Ascending aorta (tissue), 2 donors: ENCODE measurements at regions of chr1 and their contacts with region 1.

Region 1: DNA sequence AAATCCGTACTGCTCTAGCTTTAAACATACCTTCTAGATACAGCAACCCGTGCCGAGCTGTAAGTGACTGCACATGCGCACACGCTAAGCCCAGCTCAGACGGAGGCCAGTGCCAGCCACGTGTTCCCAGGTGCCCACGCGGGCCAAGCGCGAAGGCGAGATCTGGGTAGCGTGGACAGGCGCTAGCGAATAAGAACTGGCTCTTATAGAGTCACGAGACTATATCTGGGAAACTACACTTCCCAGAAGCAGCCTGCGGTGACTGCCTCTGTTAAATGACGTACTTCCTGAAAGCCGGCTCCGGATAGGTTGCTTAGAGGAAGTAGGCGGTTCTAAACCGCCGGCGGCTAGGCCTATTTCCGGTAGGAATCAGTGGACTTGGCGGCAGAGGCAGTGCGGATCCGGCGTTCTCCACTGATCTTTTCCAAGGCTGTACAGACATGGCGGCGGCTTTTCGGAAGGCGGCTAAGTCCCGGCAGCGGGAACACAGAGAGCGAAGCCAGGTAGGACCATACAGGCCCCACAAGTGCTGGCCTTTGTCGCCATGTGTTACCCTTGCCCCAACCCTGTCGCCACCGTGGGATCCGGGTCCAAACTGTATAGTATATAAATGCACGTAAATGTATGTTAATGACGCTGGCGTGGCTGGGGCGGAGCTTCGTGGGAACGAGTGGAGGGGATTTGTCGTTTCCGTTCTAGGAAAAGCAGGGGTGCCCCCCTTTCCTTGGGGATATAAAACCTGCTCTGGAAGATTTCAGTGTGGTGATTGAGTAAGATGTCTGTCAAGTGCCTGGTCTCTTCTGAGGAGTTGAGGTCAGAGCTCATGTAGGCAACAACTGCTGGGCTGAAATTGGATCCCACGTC is at the start of gene UTP11:
- DNase-seq: peak; percentile 90 to 97
- H3K4me3 ChIP-seq: peak within 1 kb of the TSS; percentile 75 to 79
- H3K27ac ChIP-seq: peak within 1 kb of the TSS; percentile 88 to 94
- H3K4me1 ChIP-seq: peaks cover 13 to 31% of the 10 kb centered on the region in 2 donors
- H3K27me3 ChIP-seq: no peaks in the 10 kb centered on the region
- CTCF ChIP-seq: no peak
- total RNA-seq, gene UTP11: 16.5 TPM

Region 2: GRCh38 chr1:36450270-36450918 is 1562.2 kb before region 1 on chr1 and contains the start of gene OSCP1:
- intact Hi-C with region 1: loop called (anchors 10 kb)
- DNase-seq: peak; percentile 75 to 97
- H3K4me3 ChIP-seq: peak within 1 kb of the TSS; percentile 55 to 82
- H3K27ac ChIP-seq: peak within 1 kb of the TSS; percentile 95 to 97
- H3K4me1 ChIP-seq: peaks cover 3 to 8% of the 10 kb centered on the region in 2 donors
- H3K27me3 ChIP-seq: no peaks in the 10 kb centered on the region
- CTCF ChIP-seq: no peak
- total RNA-seq, gene OSCP1: 10.6 TPM

Region 3: DNA sequence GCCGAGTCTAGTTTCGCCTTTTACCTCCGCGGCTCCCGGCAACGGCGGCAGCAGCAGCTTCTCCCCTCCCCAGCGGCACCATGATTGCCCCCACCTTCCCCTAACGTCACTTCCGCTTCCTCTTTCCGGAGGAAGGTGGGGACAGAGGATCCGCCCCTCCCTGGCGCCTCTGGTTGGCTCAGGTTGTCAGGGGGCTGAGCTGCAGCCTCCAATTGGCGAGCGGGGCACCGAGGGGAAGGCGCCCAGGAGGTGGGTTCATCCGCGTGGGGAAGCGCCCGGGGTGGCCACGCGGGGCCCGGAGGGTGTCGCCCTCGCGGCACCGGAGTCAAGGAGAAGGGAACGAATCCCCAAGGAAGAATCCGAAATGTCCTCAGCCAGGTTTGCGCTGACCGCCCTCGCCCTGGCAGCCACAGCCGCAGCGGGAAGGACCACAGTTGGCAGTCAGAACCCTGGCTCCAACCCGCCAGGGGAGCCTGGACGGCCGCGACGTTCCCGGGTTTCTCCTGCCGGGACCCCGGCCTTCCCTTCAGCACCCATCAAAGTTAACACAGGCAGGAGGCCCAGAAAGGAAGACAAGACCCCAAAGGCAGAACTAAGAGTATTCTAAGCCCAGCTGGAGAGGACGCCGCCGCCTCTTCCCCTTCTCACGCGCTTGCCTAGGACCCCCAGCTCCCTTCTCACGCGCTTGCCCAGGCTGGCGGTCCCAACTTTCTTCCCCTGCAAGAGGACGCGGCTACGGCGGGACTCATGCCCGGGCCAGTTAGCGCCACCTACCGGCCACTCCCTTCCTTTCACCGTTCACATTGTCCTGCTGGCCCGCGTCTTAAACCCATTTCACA is 152.9 kb before region 1 on chr1 and contains the start of gene MTF1:
- intact Hi-C with region 1: loop called (anchors 1 kb)
- DNase-seq: peak; percentile 92 to 98
- H3K4me3 ChIP-seq: peak within 1 kb of the TSS; percentile 68 to 80
- H3K27ac ChIP-seq: peak within 1 kb of the TSS; percentile 82 to 87
- H3K4me1 ChIP-seq: peaks cover 6 to 19% of the 10 kb centered on the region in 2 donors
- H3K27me3 ChIP-seq: no peaks in the 10 kb centered on the region
- CTCF ChIP-seq: peak; percentile 66 to 91 (median 81)
- total RNA-seq, gene MTF1: 10.6 TPM

Region 4: DNA sequence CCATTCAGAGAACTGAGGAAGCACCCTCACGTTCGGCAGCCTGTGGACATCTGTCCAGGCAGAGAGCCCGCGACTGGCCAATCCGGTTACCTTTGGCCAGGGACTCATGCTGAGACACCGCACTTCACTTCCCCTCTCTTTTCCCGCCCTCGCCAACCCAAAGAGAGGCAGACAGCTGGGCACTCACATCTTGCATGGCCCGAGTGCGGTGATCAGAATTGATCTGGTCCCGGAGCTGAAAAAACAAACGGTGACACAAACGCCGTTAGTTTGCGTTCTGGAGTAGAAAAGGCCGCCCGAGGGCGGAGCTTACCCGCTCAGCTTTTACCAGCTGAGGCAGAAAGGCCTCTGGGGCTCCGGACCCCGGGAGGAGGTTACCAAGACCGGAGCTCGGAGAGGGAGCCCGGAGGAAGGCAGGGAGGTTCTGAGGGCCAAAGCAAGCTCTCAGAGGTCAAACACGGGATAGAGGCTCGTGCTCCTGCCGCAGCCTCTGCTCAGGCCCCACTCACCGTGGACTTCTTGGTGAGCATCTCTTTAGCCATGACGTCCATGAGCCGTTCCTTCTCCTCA is 23.1 kb before region 1 on chr1:
- intact Hi-C with region 1: loop called (anchors 2 kb)
- DNase-seq: peak in 1 of 2 donors; percentile 68
- H3K4me3 ChIP-seq: peak overlapping the region; percentile 72 to 92
- H3K27ac ChIP-seq: peak overlapping the region; percentile 51 to 76
- H3K4me1 ChIP-seq: peaks cover 7 to 14% of the 10 kb centered on the region in 2 donors
- H3K27me3 ChIP-seq: no peaks in the 10 kb centered on the region
- CTCF ChIP-seq: no peak

Region 5: DNA sequence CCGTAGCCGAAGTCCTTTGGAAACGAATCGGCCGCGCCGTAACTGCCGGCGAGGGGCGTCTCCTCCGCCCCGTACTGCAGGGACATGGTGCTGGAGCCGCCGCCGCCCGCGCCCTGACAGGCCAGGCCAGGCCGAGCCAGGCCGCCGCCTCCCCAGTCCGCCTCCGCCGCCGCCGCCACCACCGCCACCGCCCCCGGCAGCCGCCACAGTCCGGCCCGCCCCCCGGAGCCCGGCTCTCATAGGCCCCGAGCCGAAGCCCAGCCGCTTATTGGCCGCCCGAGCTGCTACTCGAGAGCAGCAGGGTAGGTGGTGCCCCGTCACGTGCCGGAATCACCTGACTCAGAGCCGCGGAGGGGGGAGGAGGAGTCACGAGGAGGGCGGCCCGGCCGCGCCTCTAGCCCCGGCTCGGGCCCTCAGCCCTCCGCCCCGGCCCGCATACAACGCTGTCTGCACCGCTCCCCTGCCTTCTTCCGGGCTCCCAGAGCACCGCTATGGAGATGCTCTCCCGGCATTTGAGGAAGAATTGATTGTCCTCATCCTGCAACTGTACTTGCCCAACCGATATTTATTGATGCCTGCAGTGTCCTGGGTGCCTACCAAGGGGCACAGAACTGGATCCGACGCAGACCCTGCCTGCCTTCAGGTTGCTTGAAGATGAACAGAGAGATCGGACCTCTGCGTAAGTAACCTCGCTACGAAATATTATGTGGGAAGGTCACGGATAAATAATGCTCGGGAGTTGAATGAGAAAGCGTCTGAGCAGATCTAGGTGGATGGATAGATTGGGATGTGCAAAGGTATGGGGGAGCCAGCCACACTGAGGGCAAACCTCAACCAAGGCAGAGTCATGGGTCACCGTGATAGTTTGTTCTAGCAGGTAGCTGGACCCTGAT is 847.2 kb after region 1 on chr1 and contains the start of gene RRAGC:
- intact Hi-C with region 1: loop called (anchors 10 kb)
- DNase-seq: peak; percentile 100
- H3K4me3 ChIP-seq: peak within 1 kb of the TSS; percentile 91 to 97
- H3K27ac ChIP-seq: peak within 1 kb of the TSS; percentile 80 to 93
- H3K4me1 ChIP-seq: peaks cover 6 to 28% of the 10 kb centered on the region in 2 donors
- H3K27me3 ChIP-seq: no peaks in the 10 kb centered on the region
- CTCF ChIP-seq: no peak
- total RNA-seq, gene RRAGC: 6.2 TPM